ENCODE measurements at regions of chr7 and their contacts with region 1.

Region 1: DNA sequence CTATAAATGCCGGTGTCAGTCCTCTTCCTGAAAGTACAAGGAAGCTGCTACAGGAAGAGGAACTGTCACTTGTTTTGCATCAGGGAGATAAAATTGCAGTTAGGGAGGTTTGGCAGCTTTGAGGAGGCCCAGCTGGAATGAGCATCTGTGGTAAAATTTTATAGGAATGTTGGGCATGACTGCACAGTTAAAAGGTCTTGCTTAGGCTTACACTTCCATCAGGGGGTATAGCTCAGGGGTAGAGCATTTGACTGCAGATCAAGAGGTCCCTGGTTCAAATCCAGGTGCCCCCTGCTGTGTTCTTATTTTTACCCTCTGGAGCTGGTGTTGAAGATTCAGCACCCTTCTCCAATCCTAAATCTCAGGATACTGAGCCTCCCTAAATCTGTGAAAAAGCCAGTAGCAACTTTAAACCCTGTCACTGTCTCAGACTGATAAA is 65.9 kb downstream of the ZNF467 start:
- DNase-seq: peak; percentile 40
- H3K4me3 ChIP-seq: no peak overlapping the region
- H3K27ac ChIP-seq: no peak overlapping the region
- H3K4me1 ChIP-seq: no peaks in the 10 kb centered on the region
- H3K27me3 ChIP-seq: no peaks in the 10 kb centered on the region
- CTCF ChIP-seq: no peak

Region 2: DNA sequence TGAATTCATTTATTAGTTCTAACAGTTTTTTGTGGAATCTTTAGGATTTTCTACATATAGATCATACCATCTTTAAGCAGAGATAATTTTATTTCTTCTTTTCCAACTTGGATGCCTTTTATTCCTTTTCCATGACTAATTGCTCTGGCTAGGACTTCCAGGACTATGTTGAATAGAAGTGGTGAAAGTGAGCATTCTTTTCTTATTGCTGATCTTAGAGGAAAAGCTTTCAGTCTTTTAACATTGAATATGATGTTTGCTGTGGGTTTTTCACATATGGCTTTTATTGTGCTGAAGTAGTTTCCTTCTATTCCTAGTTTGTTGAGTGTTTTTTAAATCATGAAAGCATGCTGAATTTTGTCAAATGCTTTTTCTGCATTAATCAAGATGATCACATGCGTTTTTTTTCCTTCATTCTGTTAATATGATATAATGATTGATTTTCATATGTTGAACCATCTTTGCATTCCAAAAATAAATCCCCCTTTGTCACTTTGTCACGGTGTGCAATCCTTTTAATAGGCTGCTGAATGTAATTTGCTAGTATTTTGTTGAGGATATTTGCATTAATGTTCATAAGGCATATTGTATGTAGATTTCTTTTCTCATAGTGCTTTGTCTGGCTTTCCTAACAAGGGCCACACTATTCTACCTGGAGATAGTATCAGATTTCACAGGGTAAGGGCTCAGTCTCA is 27.0 kb before region 1 on chr7:
- CTCF ChIA-PET with region 1: no interaction called
- dilution Hi-C with region 1: no loop called
- in situ Hi-C with region 1: no loop called
- intact Hi-C with region 1: no loop called
- DNase-seq: no peak
- H3K4me3 ChIP-seq: no peak overlapping the region
- H3K27ac ChIP-seq: no peak overlapping the region
- H3K4me1 ChIP-seq: no peaks in the 10 kb centered on the region
- H3K27me3 ChIP-seq: no peaks in the 10 kb centered on the region
- CTCF ChIP-seq: no peak

Region 3: DNA sequence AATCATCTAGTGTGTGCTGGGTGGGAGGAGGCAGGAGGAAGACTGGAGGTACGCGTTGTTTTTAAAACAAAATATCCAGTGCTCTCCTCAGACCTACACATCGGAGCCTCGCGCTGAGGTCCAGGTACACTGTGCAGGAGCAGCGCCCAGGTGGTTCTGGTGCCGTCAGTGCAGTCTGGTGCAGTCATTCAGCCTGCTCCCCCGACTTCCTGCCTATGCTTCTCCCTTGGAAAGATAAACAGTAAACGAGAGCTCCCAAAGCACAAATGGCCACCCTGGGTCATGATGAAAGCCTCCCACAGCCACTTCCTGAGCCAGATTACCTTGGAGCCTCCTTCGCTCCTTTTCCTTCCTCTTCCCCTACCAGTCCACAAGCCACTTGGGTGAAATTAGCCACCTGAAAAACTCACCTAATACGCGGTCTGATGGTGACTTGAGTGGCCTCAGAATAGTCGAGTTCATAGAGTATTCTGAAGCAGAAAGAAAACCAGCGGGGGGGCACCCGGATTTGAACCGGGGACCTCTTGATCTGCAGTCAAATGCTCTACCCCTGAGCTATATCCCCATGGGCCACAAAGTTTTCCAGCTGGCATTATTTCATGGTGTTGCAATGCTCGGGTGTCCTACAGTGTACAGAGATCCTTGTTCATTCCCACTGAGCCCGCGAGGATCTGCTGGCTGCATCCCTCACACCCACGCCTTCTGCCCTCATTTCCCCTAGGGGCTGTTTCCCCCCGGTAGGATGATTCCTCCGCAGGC is 16.6 kb before region 1 on chr7:
- CTCF ChIA-PET with region 1: no interaction called
- dilution Hi-C with region 1: no loop called
- in situ Hi-C with region 1: no loop called
- intact Hi-C with region 1: loop called (anchors 1 kb)
- DNase-seq: peak; percentile 96
- H3K4me3 ChIP-seq: peak overlapping the region in 1 of 3 experiments; percentile 42
- H3K27ac ChIP-seq: no peak overlapping the region
- H3K4me1 ChIP-seq: no peaks in the 10 kb centered on the region
- H3K27me3 ChIP-seq: peaks cover 2% of the 10 kb centered on the region
- CTCF ChIP-seq: no peak

Measured in mammary epithelial cell (primary cell).